Activated CD4-positive, alpha-beta T cell treated with anti-CD3 and anti-CD28 coated beads, Interleukin-2, amount 10 ng/mL, durations not matched to agents 24 days and 14 days (primary cell): ENCODE measurements at regions of chr3 and their contacts with region 1.

Region 1: DNA sequence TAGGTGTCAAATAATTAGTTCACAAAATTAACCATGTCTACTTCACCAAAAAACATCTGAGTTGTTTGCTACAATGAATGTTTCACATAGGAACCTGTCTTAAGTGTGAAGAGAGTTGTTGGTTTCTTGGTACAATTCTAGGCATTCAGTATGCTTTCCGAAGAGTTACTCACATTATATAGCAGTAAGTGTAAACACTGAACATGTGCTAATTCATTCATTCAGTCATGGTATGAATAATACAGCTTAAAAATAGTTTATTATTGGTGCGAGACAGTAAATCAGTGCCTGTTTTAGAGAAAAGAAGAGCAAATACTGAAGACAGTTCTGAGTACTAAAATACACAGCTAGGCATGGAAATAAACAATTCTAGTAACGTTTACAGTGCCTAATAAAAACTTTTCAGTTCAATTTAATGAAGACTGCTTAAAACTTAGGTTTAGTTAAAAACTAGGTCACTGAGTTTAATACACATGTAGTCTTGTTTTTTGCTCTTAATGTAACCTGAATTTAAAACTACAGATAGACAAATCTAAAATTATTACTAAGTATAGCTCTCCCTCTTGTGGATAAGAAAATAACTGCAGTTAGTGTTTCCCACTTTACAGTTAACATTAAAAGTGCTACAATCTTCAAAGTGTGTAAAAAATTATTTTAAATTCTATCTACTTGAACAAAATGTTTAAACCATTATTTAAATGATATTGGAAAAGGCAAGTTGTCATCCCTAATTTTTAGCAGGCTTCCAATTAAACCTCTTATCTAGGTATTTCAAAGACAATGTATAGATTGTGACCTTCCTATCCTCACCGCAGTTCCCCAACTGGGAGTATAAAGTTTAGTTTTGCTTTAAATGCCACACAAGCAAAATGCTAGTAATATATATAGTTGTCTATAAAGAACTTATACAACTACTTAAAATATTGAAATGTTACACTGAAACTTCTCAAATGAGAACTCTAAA is 20.1 kb upstream of the ZCWPW2 start:
- DNase-seq: no peak
- H3K4me3 Mint-ChIP-seq: no peak overlapping the region
- H3K27ac Mint-ChIP-seq: no peak overlapping the region
- H3K4me1 Mint-ChIP-seq: peaks cover 23% of the 10 kb centered on the region
- H3K27me3 Mint-ChIP-seq: no peaks in the 10 kb centered on the region

Region 2: GRCh38 chr3:27134165-27134796 is 1194.2 kb before region 1 on chr3:
- intact Hi-C with region 1: loop called (anchors 10 kb)
- DNase-seq: peak; percentile 86
- H3K4me3 Mint-ChIP-seq: no peak overlapping the region
- H3K27ac Mint-ChIP-seq: no peak overlapping the region
- H3K4me1 Mint-ChIP-seq: no peaks in the 10 kb centered on the region
- H3K27me3 Mint-ChIP-seq: no peaks in the 10 kb centered on the region

Region 3: DNA sequence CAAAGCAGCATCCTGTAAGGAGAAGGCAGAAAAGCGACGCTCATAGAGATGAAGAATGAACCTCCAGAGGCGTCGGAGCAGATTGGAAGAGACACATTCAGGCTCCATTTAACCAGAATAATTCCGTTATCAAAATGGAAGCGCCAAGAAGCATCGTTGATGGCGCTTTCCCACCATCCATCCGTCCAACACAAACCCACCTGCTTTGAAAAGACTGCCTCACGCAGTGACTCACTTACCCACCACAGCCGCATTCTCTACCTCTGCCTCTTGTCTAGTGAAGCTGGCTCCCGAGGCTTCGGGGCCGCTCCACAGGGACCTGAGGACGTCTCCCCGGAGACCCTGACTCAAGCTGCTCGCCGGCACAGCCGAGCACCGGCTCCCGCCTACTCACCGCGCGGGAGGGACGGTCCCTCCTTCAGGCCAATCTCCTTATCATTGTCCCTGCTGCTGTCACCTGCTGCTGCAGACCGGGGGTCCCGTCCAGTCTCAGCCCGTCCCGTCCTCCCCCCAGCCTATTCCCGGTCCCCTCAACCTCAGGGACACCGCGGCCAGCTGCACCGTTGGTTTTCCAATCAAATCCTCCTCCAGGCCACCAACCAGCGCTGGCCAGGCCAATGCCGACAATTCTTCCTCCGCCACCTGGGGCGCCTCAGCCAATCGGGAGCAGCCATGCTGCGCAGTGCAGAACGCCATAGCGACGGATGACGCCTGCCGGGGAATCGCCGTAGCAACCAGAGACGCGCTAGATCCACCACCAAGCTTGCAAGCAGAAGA is 959.5 kb before region 1 on chr3 and contains the start of gene NEK10:
- intact Hi-C with region 1: loop called (anchors 5 kb)
- DNase-seq: peak; percentile 98
- H3K4me3 Mint-ChIP-seq: peak within 1 kb of the TSS; percentile 95
- H3K27ac Mint-ChIP-seq: peak within 1 kb of the TSS; percentile 77
- H3K4me1 Mint-ChIP-seq: peaks cover 13% of the 10 kb centered on the region
- H3K27me3 Mint-ChIP-seq: no peaks in the 10 kb centered on the region
- total RNA-seq, gene NEK10: 0.26 and 0.28 TPM in 2 replicates

Region 4: GRCh38 chr3:27712136-27713077 is 616.1 kb before region 1 on chr3:
- intact Hi-C with region 1: loop called (anchors 1 kb)
- DNase-seq: peak; percentile 94
- H3K4me3 Mint-ChIP-seq: peak overlapping the region; percentile 94
- H3K27ac Mint-ChIP-seq: peak overlapping the region; percentile 68
- H3K4me1 Mint-ChIP-seq: peaks cover 26% of the 10 kb centered on the region
- H3K27me3 Mint-ChIP-seq: peaks cover 66% of the 10 kb centered on the region

Region 5: DNA sequence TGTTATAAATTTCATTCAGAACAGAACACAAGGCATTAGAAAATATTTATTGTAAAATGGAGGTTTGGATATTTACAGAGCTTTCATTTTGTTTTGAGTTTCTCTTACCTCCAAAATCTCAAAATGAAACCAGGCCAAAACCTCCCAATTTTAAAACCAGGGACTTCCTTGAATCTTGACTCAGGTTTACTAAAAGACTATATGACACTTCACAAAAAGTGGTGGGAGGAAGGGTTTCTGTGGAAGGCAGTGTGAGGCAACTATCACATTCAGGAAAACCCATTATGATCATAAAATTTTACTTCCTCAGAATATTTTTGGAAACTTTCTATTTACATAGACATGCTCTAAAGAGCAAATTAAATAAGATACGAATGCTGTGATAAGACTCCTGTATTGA is 400.6 kb before region 1 on chr3:
- intact Hi-C with region 1: loop called (anchors 5 kb)
- DNase-seq: no peak
- H3K4me3 Mint-ChIP-seq: peak overlapping the region; percentile 45
- H3K27ac Mint-ChIP-seq: peak overlapping the region; percentile 66
- H3K4me1 Mint-ChIP-seq: peaks cover 43% of the 10 kb centered on the region
- H3K27me3 Mint-ChIP-seq: no peaks in the 10 kb centered on the region

Region 6: DNA sequence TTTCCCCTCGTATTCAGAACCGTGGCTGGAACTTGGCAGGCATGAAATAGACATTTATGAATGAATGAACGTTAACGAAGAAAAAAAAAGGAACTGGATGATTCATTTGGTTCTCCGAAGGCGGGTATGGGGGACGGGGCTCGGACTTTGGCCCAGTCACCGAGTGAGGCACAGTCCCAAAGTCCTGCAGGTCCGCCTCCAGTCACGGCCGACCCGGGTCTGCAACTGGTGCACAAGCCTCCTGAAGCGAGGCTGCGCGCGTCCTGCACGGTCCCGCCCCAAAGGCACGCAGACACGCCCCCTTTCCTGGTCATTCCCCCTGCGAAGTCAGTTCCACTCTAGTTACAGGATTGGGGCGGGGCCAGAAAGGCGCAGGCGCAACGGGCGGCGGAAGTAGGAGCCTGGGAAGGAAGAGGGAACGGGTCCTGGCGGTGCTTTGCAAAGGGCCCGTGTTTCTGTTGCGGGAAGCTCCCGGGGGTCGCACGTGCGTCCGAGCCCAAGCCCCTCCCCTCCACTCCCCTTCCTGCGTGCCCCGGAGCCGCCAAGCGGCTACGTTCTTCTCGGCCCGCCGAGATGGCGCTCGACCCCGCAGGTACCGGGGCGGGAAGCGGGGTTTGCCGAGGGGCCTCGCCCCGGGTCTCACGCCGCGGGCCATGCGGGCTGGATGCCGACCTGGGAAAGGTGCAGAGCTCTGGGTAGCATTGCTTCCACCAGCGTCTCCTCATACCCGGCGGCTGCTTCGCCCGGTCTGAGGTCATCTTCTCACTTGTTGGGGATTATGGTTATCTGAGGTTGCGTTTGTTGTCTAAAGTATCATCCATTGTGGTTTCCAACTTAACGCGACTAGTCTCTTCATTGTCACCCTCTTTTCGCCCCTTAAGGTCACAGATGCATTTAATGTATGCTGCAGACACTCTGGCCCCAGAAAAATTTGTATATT is 87.0 kb before region 1 on chr3 and contains the start of gene CMC1:
- intact Hi-C with region 1: loop called (anchors 2 kb)
- DNase-seq: peak; percentile 97
- H3K4me3 Mint-ChIP-seq: peak within 1 kb of the TSS; percentile 94
- H3K27ac Mint-ChIP-seq: peak within 1 kb of the TSS; percentile 93
- H3K4me1 Mint-ChIP-seq: peaks cover 31% of the 10 kb centered on the region
- H3K27me3 Mint-ChIP-seq: no peaks in the 10 kb centered on the region
- total RNA-seq, gene CMC1: 21.3 and 23.2 TPM in 2 replicates

Region 7: DNA sequence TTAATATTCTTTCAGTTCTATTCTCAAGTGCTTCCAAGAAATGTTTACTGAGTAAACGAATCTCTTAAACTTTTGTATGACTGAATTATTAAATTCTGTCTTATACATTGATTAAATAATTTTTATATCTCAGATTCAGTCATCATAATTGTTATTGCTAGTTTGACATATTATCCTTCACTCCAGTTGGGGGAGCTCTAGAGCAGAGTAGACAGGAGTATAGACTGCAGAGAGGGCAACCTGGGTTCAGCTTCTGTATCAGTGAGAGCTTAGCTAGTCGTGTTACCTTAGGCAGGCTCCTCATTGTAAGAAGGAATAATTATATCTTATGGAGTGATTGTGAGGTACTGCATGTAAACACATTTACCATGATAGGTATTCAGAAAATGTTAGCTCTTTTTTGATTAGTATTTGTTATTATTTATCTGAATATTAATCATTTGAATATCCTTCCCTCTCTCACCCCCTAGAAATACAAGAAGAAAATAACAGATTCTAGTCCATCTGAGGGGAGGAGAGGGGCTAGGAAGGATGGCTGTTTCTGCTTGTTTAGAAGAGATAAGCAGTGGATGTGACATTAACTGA is 10.9 kb before region 1 on chr3:
- intact Hi-C with region 1: loop called (anchors 1 kb)
- DNase-seq: peak; percentile 82
- H3K4me3 Mint-ChIP-seq: no peak overlapping the region
- H3K27ac Mint-ChIP-seq: no peak overlapping the region
- H3K4me1 Mint-ChIP-seq: peaks cover 14% of the 10 kb centered on the region
- H3K27me3 Mint-ChIP-seq: no peaks in the 10 kb centered on the region